ENCODE measurements at regions of chr12 and their contacts with region 1.

Region 1: DNA sequence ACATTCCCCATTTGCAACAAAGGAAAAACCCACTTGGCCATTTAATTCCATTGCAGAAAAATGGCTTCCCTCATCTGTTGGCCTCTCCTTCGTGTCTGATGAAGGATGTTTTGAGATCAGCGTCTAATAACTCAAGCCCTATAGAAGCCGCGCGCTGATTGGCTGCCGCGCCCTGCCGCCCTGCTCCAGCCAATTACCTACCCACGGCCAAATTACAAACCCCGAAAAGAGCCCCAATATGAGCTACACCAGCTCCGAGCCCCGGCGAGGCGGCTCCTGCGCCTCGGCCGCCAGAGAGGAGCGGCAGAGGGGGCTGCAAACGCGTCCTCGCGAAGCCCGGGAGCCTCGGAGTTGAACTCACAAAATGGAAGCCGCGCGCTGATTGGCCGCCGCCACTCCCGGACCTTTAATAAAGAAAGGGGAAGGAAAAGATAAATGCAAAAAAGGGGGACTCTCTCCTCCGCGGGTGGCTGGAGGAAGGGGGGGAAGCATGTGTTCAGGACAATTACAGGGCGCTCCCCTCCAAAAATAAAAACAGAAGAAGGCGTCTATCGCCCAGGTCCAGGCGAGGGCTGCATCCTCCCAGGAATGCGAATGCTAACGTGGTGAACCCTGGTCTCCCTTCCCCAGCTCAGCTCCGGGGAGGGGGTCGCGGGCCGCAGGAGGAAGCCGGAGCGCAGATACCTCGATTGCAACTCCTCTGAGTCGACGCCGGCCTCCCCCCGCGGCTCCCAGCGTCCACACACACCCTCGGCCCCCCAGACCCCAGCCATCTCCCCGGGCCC is 771 bp upstream of the SETD1B start:
- DNase-seq: peak; percentile 90 to 93 (median 91)
- H3K4me3 ChIP-seq: peak overlapping the region; percentile 98
- H3K4me3 Mint-ChIP-seq: peak overlapping the region; percentile 92 to 99 (median 98)
- H3K27ac ChIP-seq: peak overlapping the region; percentile 91
- H3K27ac Mint-ChIP-seq: peak overlapping the region; percentile 98 to 99 (median 99)
- H3K4me1 ChIP-seq: peaks cover 37% of the 10 kb centered on the region
- H3K4me1 Mint-ChIP-seq: peaks cover 21 to 60% (median 35%) of the 10 kb centered on the region in 4 donors
- H3K27me3 ChIP-seq: no peaks in the 10 kb centered on the region
- H3K27me3 Mint-ChIP-seq: no peaks in the 10 kb centered on the region

Region 2: GRCh38 chr12:121641343-121641630 is 161.8 kb before region 1 on chr12:
- CTCF ChIA-PET with region 1: no interaction called
- POLR2A ChIA-PET with region 1: no interaction called
- intact Hi-C with region 1: no loop called
- DNase-seq: no peak
- H3K4me3 ChIP-seq: no peak overlapping the region
- H3K4me3 Mint-ChIP-seq: no peak overlapping the region
- H3K27ac ChIP-seq: no peak overlapping the region
- H3K27ac Mint-ChIP-seq: peak overlapping the region in 3 of 7 donors; percentile 13 to 74 (median 59)
- H3K4me1 ChIP-seq: peaks cover 28% of the 10 kb centered on the region
- H3K4me1 Mint-ChIP-seq: peaks cover 18 to 29% (median 23%) of the 10 kb centered on the region in 4 donors
- H3K27me3 ChIP-seq: no peaks in the 10 kb centered on the region
- H3K27me3 Mint-ChIP-seq: no peaks in the 10 kb centered on the region

Region 3: DNA sequence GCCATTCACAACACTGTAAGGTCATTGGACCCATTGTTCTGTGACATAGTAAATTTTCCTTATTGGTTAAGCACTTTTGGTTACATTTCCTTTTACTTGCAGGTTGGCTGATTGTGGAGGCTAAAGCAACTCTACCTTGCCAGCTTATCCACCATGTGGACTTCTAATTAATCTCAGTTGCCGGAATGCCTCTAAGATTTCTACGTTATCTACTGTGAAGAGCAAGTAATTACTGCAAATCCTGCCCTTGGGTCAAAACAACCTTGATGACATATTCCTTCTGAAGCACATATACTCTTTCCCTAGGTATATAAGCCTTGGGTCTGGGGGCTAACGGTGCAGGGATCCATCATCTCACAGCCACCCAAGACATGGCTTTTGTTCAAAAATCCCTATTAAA is 114.1 kb before region 1 on chr12:
- CTCF ChIA-PET with region 1: no interaction called
- POLR2A ChIA-PET with region 1: interaction called, 10 read pairs
- intact Hi-C with region 1: no loop called
- DNase-seq: no peak
- H3K4me3 ChIP-seq: no peak overlapping the region
- H3K4me3 Mint-ChIP-seq: no peak overlapping the region
- H3K27ac ChIP-seq: no peak overlapping the region
- H3K27ac Mint-ChIP-seq: peak overlapping the region in 5 of 7 donors; percentile 12 to 48 (median 37)
- H3K4me1 ChIP-seq: peaks cover 6% of the 10 kb centered on the region
- H3K4me1 Mint-ChIP-seq: peaks cover 6 to 13% (median 7%) of the 10 kb centered on the region in 4 donors
- H3K27me3 ChIP-seq: no peaks in the 10 kb centered on the region
- H3K27me3 Mint-ChIP-seq: no peaks in the 10 kb centered on the region

Region 4: DNA sequence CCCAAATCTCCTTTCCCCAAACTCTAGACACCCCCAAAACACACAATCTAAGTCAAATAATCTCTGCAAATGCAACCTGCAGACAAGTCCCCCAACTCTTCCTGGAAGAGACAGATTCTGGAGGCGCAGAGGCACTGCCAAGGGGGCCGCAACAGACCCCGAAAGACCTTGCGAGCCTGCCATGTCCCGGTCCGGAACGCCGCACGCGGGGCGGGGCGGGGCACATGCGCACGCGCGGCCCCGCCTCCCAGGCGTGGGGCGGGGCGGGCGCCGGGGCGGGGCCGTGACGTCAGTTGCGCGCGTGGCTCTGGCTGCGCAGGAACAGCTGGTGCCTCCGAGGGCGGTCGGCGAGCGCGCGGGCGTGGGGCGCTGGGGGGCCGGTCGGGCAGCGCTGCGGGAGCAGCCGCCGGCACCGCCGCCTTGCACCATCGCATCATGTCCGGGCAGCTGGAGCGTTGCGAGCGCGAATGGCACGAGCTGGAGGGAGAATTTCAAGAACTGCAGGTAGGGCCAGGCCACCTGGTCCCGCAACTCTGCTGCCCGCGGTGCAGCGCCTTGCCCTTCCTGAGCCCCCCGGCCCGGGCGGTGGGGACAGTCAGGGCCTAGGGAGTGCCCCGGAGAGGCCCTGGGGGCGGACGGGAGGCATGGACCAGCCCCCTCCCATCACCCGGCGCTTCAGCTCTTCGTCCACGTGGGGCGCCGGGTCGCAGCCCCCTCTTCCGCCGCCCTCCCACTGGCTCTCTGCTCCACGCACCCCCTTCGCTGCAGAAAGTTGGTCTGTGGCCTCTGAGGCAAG is 90.4 kb before region 1 on chr12 and contains the start of gene TMEM120B:
- CTCF ChIA-PET with region 1: interaction called, 4 read pairs
- POLR2A ChIA-PET with region 1: interaction called, 21 read pairs
- intact Hi-C with region 1: no loop called
- DNase-seq: peak; percentile 78 to 89 (median 84)
- H3K4me3 ChIP-seq: peak within 1 kb of the TSS; percentile 57 to 93
- H3K4me3 Mint-ChIP-seq: peak within 1 kb of the TSS; percentile 91 to 98 (median 96)
- H3K27ac ChIP-seq: peak within 1 kb of the TSS; percentile 63
- H3K27ac Mint-ChIP-seq: peak within 1 kb of the TSS; percentile 85 to 97 (median 95)
- H3K4me1 ChIP-seq: peaks cover 16% of the 10 kb centered on the region
- H3K4me1 Mint-ChIP-seq: peaks cover 7 to 26% (median 17%) of the 10 kb centered on the region in 4 donors
- H3K27me3 ChIP-seq: no peaks in the 10 kb centered on the region
- H3K27me3 Mint-ChIP-seq: no peaks in the 10 kb centered on the region
- total RNA-seq, gene TMEM120B: 11.3 to 12.8 TPM

Region 5: DNA sequence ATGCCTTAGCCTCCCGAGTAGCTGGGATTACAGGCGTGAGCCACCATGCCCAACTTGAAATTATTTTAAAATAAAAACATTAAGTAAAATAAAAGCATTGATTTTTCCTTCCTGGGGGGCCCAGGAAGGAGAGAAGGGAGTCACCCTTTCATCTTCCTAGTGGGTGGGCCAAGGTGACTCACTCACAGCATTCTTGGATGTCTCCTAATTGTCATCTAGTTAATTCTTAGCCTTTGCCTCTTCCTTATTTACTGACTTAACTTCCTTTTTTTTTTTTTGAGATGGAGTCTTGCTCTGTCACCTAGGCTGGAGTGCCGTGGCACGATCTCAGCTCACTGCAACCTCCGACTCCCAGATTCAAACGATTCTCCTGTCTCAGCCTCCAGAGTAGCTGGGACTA is 61.3 kb before region 1 on chr12:
- CTCF ChIA-PET with region 1: no interaction called
- POLR2A ChIA-PET with region 1: no interaction called
- intact Hi-C with region 1: no loop called
- DNase-seq: no peak
- H3K4me3 ChIP-seq: no peak overlapping the region
- H3K4me3 Mint-ChIP-seq: no peak overlapping the region
- H3K27ac ChIP-seq: no peak overlapping the region
- H3K27ac Mint-ChIP-seq: peak overlapping the region in 1 of 7 donors; percentile 68
- H3K4me1 ChIP-seq: no peaks in the 10 kb centered on the region
- H3K4me1 Mint-ChIP-seq: peaks cover 0 to 2% (median 0%) of the 10 kb centered on the region in 4 donors
- H3K27me3 ChIP-seq: no peaks in the 10 kb centered on the region
- H3K27me3 Mint-ChIP-seq: no peaks in the 10 kb centered on the region

Region 6: DNA sequence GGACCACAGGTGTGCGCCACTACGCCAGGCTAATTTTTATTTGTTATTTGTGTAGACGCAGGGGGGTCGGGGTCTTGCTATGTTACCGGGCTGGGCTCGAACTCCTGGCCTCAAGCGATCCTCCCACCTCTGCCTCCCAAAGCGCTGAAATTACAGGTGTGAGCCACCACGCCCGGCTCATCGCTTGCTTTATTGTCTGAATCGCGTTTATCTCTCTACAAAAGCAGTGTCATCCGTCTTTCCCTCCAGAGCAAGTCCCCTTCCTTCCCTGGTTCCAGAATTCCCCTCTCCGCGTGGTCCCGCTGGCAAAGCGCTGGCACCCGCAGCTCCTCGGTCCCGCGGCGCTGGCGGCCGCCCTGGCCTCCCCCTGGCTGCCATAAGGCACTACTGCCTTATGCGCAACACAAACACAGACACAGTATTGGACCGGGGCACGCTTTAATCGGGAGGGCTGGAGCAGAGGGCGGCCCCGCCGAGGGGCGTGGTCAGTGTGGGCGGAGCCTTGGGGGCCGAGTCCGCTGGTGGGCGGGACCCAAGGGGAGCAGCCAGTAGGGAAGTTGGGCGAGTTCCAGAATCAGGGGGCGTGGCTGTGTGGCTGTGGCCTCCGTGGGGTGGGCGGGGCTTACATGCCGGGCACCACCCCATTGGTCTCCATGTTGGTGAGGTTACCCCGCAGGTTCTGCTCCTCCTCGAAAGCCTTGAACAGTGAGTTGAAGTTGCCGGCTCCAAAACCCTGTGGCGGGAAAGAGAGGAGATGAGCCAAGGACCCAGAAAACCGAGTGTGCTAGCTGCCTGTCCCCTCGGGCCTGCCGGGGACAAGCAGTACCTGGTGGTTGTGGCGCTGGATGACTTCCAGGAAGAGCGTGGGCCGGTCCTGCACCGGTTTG is 36.3 kb after region 1 on chr12:
- CTCF ChIA-PET with region 1: interaction called, 51 read pairs
- POLR2A ChIA-PET with region 1: interaction called, 33 read pairs
- intact Hi-C with region 1: loop called (anchors 1 kb)
- DNase-seq: peak; percentile 99 to 100 (median 99)
- H3K4me3 ChIP-seq: peak overlapping the region; percentile 70 to 95
- H3K4me3 Mint-ChIP-seq: peak overlapping the region; percentile 96 to 99 (median 99)
- H3K27ac ChIP-seq: peak overlapping the region; percentile 46
- H3K27ac Mint-ChIP-seq: peak overlapping the region; percentile 86 to 97 (median 93)
- H3K4me1 ChIP-seq: peaks cover 9% of the 10 kb centered on the region
- H3K4me1 Mint-ChIP-seq: peaks cover 10 to 23% (median 14%) of the 10 kb centered on the region in 4 donors
- H3K27me3 ChIP-seq: no peaks in the 10 kb centered on the region
- H3K27me3 Mint-ChIP-seq: no peaks in the 10 kb centered on the region

Region 7: GRCh38 chr12:121888478-121889266 is 85.6 kb after region 1 on chr12 and contains the start of gene PSMD9:
- CTCF ChIA-PET with region 1: interaction called, 119 read pairs
- POLR2A ChIA-PET with region 1: interaction called, 117 read pairs
- intact Hi-C with region 1: no loop called
- DNase-seq: peak; percentile 97 to 99 (median 98)
- H3K4me3 ChIP-seq: peak within 1 kb of the TSS; percentile 77 to 88
- H3K4me3 Mint-ChIP-seq: peak within 1 kb of the TSS; percentile 96 to 99 (median 98)
- H3K27ac ChIP-seq: peak within 1 kb of the TSS; percentile 91
- H3K27ac Mint-ChIP-seq: peak within 1 kb of the TSS; percentile 99 to 100 (median 99)
- H3K4me1 ChIP-seq: peaks cover 29% of the 10 kb centered on the region
- H3K4me1 Mint-ChIP-seq: peaks cover 19 to 43% (median 33%) of the 10 kb centered on the region in 4 donors
- H3K27me3 ChIP-seq: no peaks in the 10 kb centered on the region
- H3K27me3 Mint-ChIP-seq: peaks cover 0 to 3% of the 10 kb centered on the region in 2 donors
- total RNA-seq, gene PSMD9: 41.4 to 42.7 TPM

Region 8: DNA sequence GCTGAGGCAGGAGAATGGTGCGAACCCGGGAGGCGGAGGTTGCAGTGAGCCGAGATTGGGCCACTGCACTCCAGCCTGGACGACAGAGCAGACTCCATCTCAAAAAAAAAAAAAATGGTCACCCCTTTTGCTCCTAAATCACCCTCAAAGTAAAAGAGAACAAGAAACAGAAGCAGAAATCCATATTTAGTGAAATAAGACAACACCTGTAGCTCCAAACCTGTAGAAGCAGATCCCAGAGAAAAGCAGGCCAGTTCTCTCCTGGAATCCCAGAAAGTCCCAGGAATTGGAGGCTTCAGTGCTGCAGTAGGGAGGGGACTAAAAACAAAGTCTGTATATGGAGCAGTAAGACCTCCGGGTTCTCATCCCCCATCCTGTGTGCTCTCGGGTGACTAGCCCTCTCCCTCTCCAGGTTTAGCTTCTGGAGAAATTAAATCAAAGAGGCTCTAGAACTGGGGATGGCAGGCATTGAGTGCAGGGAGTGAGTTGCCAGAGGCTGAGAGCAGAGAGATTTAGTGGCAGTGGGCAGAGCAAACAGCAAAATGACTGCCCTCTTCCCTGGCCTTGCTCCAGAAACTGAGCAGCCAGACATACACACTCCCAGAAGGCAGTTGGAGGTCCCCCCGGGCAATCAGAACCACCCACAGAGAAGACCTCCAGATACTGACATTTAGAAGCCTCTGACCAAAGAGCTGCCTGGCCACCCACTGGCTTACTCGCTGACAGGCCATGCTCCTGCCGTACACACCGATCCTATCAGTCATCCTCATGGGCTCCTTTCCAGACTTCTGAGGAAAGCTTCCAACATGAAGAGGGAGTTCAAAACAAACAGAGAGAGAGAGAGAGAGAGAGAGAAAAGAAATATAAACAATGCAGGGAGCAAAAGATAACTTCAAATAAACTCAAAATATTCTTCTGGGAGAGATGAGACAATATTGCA is 269.3 kb after region 1 on chr12:
- CTCF ChIA-PET with region 1: no interaction called
- POLR2A ChIA-PET with region 1: no interaction called
- intact Hi-C with region 1: no loop called
- DNase-seq: no peak
- H3K4me3 ChIP-seq: no peak overlapping the region
- H3K4me3 Mint-ChIP-seq: no peak overlapping the region
- H3K27ac ChIP-seq: no peak overlapping the region
- H3K27ac Mint-ChIP-seq: no peak overlapping the region
- H3K4me1 ChIP-seq: peaks cover 16% of the 10 kb centered on the region
- H3K4me1 Mint-ChIP-seq: peaks cover 8 to 12% (median 10%) of the 10 kb centered on the region in 4 donors
- H3K27me3 ChIP-seq: no peaks in the 10 kb centered on the region
- H3K27me3 Mint-ChIP-seq: no peaks in the 10 kb centered on the region

Measured in CD4-positive, alpha-beta memory T cell (primary cell).